ENCODE measurements at regions of chr5 and their contacts with region 1.

Region 1: DNA sequence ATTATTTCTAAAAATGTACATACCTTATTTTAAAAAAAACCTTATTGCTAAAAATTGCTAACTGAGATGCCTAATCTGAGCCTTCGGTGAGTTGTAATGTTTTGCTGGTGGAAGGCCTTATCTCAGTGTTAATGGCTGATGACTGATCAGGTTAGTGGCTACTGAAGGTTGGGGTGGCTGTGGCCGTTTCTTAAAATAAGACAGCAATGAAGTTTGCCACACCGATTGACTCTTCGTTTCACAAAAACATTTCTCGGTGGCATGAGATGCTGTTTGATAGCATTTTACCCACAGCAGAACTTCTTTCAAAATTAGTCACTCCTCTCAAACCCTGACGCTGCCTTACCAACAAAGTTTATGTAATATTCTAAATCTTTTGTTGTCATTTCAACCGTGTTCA is 14.7 kb downstream of the CENPK start:
- DNase-seq: no peak
- ATAC-seq: no peak
- H3K4me3 ChIP-seq: no peak overlapping the region
- H3K4me3 Mint-ChIP-seq: no peak overlapping the region
- H3K27ac ChIP-seq: no peak overlapping the region
- H3K27ac Mint-ChIP-seq: no peak overlapping the region
- H3K4me1 ChIP-seq: no peaks in the 10 kb centered on the region
- H3K4me1 Mint-ChIP-seq: peaks cover 0 to 11% (median 9%) of the 10 kb centered on the region in 3 donors
- H3K27me3 ChIP-seq: no peaks in the 10 kb centered on the region
- H3K27me3 Mint-ChIP-seq: no peaks in the 10 kb centered on the region

Region 2: DNA sequence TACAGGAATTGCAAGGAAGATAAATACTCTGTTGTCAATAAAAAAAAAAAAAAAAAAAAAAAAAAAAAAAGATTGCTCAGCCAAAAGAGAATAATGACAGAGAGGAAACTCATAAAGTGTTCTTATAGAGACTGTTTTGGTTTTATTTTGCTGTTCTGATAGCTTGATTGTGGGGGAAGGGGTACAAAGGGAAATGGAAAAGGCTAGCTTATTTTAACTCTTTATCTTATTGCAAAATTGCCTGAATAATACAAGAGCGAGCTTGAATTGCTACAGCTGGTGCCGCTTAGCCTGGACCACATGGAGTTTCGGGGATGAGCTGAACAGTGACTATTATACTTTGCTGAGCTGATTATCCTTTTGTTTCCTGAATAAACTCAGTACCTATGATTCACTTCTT is 889.0 kb before region 1 on chr5:
- CTCF ChIA-PET with region 1: no interaction called
- POLR2A ChIA-PET with region 1: interaction called in 1 of 2 experiments, 16 read pairs
- DNase-seq: no peak
- ATAC-seq: no peak
- H3K4me3 ChIP-seq: no peak overlapping the region
- H3K4me3 Mint-ChIP-seq: no peak overlapping the region
- H3K27ac ChIP-seq: no peak overlapping the region
- H3K27ac Mint-ChIP-seq: no peak overlapping the region
- H3K4me1 ChIP-seq: no peaks in the 10 kb centered on the region
- H3K4me1 Mint-ChIP-seq: no peaks in the 10 kb centered on the region
- H3K27me3 ChIP-seq: peaks cover 0 to 2% of the 10 kb centered on the region in 2 experiments
- H3K27me3 Mint-ChIP-seq: peaks cover under 1 to 3% of the 10 kb centered on the region in 2 donors